Prostate gland (tissue), 2 donors: ENCODE measurements at regions of chr19 and their contacts with region 1.

Region 1: GRCh38 chr19:48113190-48113917 is 2.7 kb upstream of the PLA2G4C start:
- DNase-seq: no peak
- H3K4me3 ChIP-seq: no peak overlapping the region
- H3K27ac ChIP-seq: no peak overlapping the region
- H3K4me1 ChIP-seq: peaks cover 4% of the 10 kb centered on the region
- H3K27me3 ChIP-seq: no peaks in the 10 kb centered on the region
- CTCF ChIP-seq: no peak
- POLR2A ChIP-seq: no peak

Region 2: DNA sequence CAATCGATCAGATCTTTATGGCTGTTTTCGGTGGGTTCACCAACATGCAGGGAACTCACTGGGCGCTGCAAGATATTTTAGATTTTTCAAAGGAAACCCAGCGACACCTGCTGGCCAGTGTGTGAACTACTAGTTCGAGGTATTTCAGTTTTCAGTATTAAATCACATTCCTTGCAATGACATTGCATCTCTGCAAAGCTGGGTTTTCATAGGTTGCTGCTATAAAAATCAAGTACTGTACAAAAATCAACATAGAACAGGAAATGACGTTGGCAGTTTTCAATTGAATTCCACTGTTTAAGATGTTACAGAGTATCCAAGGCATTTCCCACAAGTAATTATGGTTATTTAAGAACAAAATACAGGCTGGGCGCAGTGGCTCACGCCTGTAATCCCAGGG is 39.2 kb after region 1 on chr19:
- intact Hi-C with region 1: loop called (anchors 2 kb)
- DNase-seq: peak; percentile 53
- H3K4me3 ChIP-seq: no peak overlapping the region
- H3K27ac ChIP-seq: no peak overlapping the region
- H3K4me1 ChIP-seq: peaks cover 12% of the 10 kb centered on the region
- H3K27me3 ChIP-seq: no peaks in the 10 kb centered on the region
- CTCF ChIP-seq: peak; percentile 75 to 95 (median 87)
- POLR2A ChIP-seq: no peak